ENCODE measurements at regions of chr18 and their contacts with region 1.

Region 1: GRCh38 chr18:9066817-9067306 is 35.6 kb upstream of the NDUFV2 start:
- DNase-seq: no peak
- H3K4me3 ChIP-seq: no peak overlapping the region
- H3K27ac ChIP-seq: no peak overlapping the region
- H3K4me1 ChIP-seq: peaks cover 0 to 12% (median 9%) of the 10 kb centered on the region in 3 donors
- H3K27me3 ChIP-seq: no peaks in the 10 kb centered on the region
- CTCF ChIP-seq: no peak
- POLR2A ChIP-seq: peak in 1 of 4 donors; percentile 5

Region 2: GRCh38 chr18:9117980-9118841 is 51.3 kb after region 1 on chr18:
- intact Hi-C with region 1: no loop called
- DNase-seq: no peak
- H3K4me3 ChIP-seq: peak overlapping the region in 2 of 4 donors; percentile 4 to 55
- H3K27ac ChIP-seq: peak overlapping the region; percentile 75 to 95 (median 86)
- H3K4me1 ChIP-seq: peaks cover 7 to 95% (median 47%) of the 10 kb centered on the region in 3 donors
- H3K27me3 ChIP-seq: no peaks in the 10 kb centered on the region
- CTCF ChIP-seq: no peak
- POLR2A ChIP-seq: no peak

Region 3: GRCh38 chr18:9147440-9148202 is 80.8 kb after region 1 on chr18:
- intact Hi-C with region 1: loop called (anchors 10 kb)
- DNase-seq: no peak
- H3K4me3 ChIP-seq: no peak overlapping the region
- H3K27ac ChIP-seq: peak overlapping the region in 2 of 4 donors; percentile 38 to 62
- H3K4me1 ChIP-seq: peaks cover 8 to 97% (median 40%) of the 10 kb centered on the region in 3 donors
- H3K27me3 ChIP-seq: no peaks in the 10 kb centered on the region
- CTCF ChIP-seq: peak; percentile 61 to 87 (median 74)
- POLR2A ChIP-seq: no peak